Psoas muscle (tissue), 8 donors: ENCODE measurements at regions of chr16 and their contacts with region 1.

Region 1: GRCh38 chr16:10971560-10971961 is 27.2 kb downstream of the CLEC16A start:
- DNase-seq: no peak
- ATAC-seq: peak; percentile 68 to 85 (median 71)
- H3K4me3 ChIP-seq: no peak overlapping the region
- H3K27ac ChIP-seq: no peak overlapping the region
- H3K4me1 ChIP-seq: peaks cover 5% of the 10 kb centered on the region
- H3K27me3 ChIP-seq: no peaks in the 10 kb centered on the region
- CTCF ChIP-seq: peak; percentile 76

Region 2: GRCh38 chr16:11100239-11100750 is 128.7 kb after region 1 on chr16:
- intact Hi-C with region 1: loop called in 1 of 2 experiments (anchors 5 kb)
- DNase-seq: peak; percentile 64 to 75
- ATAC-seq: peak in 2 of 4 donors; percentile 23 to 31
- H3K4me3 ChIP-seq: no peak overlapping the region
- H3K27ac ChIP-seq: peak overlapping the region; percentile 17
- H3K4me1 ChIP-seq: peaks cover 21% of the 10 kb centered on the region
- H3K27me3 ChIP-seq: no peaks in the 10 kb centered on the region
- CTCF ChIP-seq: no peak